ENCODE measurements at regions of chr18 and their contacts with region 1.

Region 1: DNA sequence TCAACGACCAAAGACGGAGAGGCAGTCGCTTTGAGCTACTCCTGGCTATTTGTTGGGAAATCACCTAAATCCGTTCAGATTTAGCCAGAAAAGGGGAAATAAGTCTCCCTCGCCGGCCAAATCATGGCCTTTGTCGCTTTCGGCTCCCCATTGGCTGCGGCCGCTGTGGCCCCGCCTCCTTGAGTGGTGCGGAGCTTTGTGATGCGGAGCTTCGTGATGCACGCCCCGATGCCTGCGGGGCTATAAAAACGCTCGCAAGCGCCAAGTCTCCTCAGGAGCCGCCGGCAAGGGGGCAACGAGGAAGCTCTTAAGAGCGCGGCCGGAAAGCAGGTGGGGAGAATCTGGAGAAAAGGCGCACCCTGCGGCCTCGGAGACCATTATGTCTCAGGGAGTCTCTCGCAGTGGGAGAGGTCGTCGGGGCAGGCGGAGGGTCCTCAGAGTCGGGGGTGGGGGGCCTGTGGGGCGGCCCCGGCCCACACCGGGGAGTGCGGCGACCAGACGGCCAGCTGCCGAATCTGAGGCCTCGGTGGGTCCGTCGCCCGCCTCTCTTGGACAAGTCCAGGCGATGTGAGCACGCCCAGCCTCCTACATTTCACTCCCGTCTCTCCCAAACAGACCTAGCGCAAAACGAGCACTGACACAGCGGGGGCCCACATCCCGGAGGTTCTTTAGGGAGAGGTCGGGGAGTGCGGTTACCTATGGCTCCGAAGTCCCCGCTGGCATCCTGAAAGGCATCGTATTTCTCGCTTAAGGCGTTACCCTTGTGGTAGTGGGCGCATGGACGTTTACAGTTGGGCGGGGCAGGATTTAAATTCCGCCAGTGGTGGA is at the start of gene CABYR:
- DNase-seq: peak; percentile 58 to 91
- ATAC-seq: peak; percentile 95 to 96
- H3K4me3 ChIP-seq: peak within 1 kb of the TSS; percentile 95
- H3K27ac ChIP-seq: peak within 1 kb of the TSS; percentile 93 to 94
- H3K4me1 ChIP-seq: peaks cover 22% of the 10 kb centered on the region
- CTCF ChIP-seq: no peak
- EP300 ChIP-seq: no peak
- POLR2A ChIP-seq: peak; percentile 98
- RAD21 ChIP-seq: no peak
- polyA plus RNA-seq, gene CABYR: 22.1 and 26.8 TPM in 2 replicates

Region 2: GRCh38 chr18:24075731-24076130 is 63.3 kb before region 1 on chr18:
- CTCF ChIA-PET with region 1: no interaction called
- POLR2A ChIA-PET with region 1: interaction called, 10 read pairs
- DNase-seq: no peak
- ATAC-seq: peak in 1 of 2 experiments; percentile 32; a peak in 3 of 6 replicates
- H3K4me3 ChIP-seq: no peak overlapping the region
- H3K27ac ChIP-seq: peak overlapping the region; percentile 74 to 93
- H3K4me1 ChIP-seq: peaks cover 36% of the 10 kb centered on the region
- CTCF ChIP-seq: no peak
- EP300 ChIP-seq: no peak
- POLR2A ChIP-seq: no peak
- RAD21 ChIP-seq: no peak

Region 3: DNA sequence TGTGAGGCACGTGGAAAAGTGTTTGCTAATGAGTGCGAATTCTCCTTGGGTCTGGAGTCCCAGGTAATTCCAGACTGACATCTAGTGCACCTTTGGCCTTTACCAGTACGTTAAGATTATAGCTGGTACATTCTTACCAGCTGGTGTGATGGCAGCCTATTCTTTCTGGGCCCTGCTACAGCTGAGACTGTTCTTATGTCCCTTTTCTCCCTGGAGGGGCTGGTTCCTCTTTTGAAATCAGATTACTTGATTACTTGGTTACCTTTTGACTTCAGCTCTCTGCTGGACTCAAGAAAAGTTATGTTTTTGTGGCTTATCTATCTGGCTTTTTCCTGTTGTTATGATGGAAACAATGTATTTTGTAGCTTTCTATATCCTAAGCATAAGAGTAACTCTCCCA is 14.4 kb after region 1 on chr18:
- CTCF ChIA-PET with region 1: interaction called, 3 read pairs
- POLR2A ChIA-PET with region 1: interaction called, 11 read pairs
- DNase-seq: no peak
- ATAC-seq: no peak
- H3K4me3 ChIP-seq: no peak overlapping the region
- H3K27ac ChIP-seq: no peak overlapping the region
- H3K4me1 ChIP-seq: no peaks in the 10 kb centered on the region
- CTCF ChIP-seq: no peak
- EP300 ChIP-seq: no peak
- POLR2A ChIP-seq: no peak
- RAD21 ChIP-seq: no peak

Region 4: DNA sequence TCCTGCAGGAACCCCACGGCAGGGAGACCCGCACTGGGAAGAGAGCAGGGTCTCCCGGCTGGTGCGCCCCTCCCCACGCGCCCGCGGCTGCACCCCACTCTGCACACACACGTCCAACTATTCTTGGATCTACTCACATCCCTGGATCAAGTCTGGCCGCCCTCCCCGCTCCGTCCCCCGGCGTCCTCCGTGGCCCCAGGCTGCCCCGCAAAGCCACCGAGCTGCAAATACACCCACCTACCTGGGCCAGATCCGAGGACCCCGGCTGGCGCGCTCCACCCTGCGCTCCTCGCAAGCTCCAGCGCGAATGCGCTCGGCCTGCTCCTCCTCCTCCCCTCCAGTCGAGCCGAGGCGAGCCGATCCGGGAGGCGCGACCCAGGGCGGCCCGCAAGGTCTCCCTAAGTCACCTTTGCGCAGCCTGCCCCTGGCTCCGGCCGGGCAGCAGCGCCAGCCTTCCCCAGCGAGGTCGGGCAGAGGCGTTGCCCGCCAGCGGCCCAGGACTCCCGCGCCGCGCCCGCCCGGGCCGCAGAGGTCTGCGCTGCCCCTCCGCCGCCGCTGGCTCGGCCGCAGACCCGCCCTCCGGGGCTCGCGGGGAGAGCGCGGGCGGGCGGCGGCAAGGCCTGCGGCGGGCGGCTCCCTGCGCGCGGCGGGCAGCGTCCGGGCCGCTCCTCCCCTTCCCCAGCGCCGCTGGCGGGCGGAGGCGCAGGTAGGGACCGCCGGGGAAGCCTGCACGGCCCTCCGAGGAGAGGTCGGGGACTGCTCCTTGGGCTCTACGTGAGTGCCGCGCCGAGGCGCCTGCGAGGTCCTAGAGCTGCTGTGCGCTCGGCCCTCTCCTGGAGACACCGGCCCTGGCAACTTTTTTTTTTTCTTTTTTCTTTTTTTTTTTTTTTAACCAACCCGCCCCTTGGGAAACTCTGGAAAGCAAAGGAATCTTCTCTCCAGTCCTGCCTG is 132.7 kb after region 1 on chr18:
- CTCF ChIA-PET with region 1: no interaction called
- POLR2A ChIA-PET with region 1: interaction called, 28 read pairs
- DNase-seq: peak; percentile 56 to 80
- ATAC-seq: peak; percentile 93 to 96
- H3K4me3 ChIP-seq: peak overlapping the region; percentile 80
- H3K27ac ChIP-seq: peak overlapping the region; percentile 88 to 97
- H3K4me1 ChIP-seq: peaks cover 19% of the 10 kb centered on the region; the same call in 2 of the 3 replicates
- CTCF ChIP-seq: peak; percentile 19; the same call in 2 of the 3 replicates
- EP300 ChIP-seq: no peak
- POLR2A ChIP-seq: peak; percentile 69
- RAD21 ChIP-seq: no peak

Region 5: DNA sequence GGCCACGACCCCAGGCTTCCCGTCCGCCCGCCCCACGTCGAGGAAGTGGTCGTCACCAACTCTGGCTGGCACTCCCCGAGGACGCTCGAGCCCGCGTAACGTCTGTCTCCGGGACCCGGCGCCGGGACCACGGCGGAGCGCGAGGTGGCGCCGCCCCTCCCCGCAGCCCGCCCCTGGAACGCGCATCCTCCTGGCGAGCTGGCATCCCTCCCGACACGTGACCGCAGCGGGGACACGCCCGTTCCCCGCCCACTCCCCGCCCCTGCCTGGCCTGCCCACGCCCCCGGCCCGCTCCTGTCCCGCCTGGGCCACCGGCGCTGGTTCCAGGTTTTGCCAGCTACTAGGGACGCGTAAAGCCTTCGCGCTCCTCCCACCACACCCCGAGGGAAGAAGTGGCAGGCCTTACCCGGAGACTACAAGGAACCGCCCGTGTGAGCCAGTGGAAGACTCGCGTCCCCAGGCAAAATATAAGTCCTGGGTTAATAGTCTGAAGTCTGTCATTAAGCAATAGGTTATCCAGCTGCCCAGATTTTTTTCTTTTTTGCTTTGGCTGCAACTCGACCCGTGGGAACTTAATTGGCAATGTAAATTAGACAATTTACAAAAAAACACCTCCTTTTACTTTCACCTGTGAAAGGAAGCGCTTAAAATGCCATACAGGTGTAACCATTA is 258.8 kb after region 1 on chr18 and contains the start of gene OSBPL1A:
- CTCF ChIA-PET with region 1: no interaction called
- POLR2A ChIA-PET with region 1: interaction called, 13 read pairs
- DNase-seq: peak; percentile 69 to 86
- ATAC-seq: peak; percentile 93 to 94
- H3K4me3 ChIP-seq: peak within 1 kb of the TSS; percentile 72
- H3K27ac ChIP-seq: peak within 1 kb of the TSS; percentile 78 to 91
- H3K4me1 ChIP-seq: peaks cover 16% of the 10 kb centered on the region; the same call in 2 of the 3 replicates
- CTCF ChIP-seq: no peak
- EP300 ChIP-seq: no peak
- POLR2A ChIP-seq: peak; percentile 50
- RAD21 ChIP-seq: no peak
- polyA plus RNA-seq, gene OSBPL1A: 17.6 and 22.1 TPM in 2 replicates

Measured in A549 (cell line).